ENCODE measurements at regions of chr7 and their contacts with region 1.

Region 1: GRCh38 chr7:53350241-53350640 is 314.8 kb downstream of the POM121L12 start:
- DNase-seq: peak; percentile 46
- H3K4me3 Mint-ChIP-seq: no peak overlapping the region
- H3K27ac Mint-ChIP-seq: no peak overlapping the region
- H3K4me1 Mint-ChIP-seq: no peaks in the 10 kb centered on the region
- H3K27me3 Mint-ChIP-seq: peaks cover 48% of the 10 kb centered on the region
- CTCF ChIP-seq: peak; percentile 60

Region 2: GRCh38 chr7:53292341-53292740 is 57.9 kb before region 1 on chr7:
- CTCF ChIA-PET with region 1: no interaction called
- POLR2A ChIA-PET with region 1: no interaction called
- intact Hi-C with region 1: no loop called
- DNase-seq: no peak
- H3K4me3 Mint-ChIP-seq: no peak overlapping the region
- H3K27ac Mint-ChIP-seq: no peak overlapping the region
- H3K4me1 Mint-ChIP-seq: no peaks in the 10 kb centered on the region
- H3K27me3 Mint-ChIP-seq: peaks cover 74% of the 10 kb centered on the region
- CTCF ChIP-seq: no peak

Region 3: GRCh38 chr7:54678763-54679489 is 1328.7 kb after region 1 on chr7:
- CTCF ChIA-PET with region 1: interaction called, 3 read pairs
- POLR2A ChIA-PET with region 1: no interaction called
- intact Hi-C with region 1: loop called (anchors 5 kb)
- DNase-seq: no peak
- H3K4me3 Mint-ChIP-seq: no peak overlapping the region
- H3K27ac Mint-ChIP-seq: no peak overlapping the region
- H3K4me1 Mint-ChIP-seq: no peaks in the 10 kb centered on the region
- H3K27me3 Mint-ChIP-seq: peaks cover 92% of the 10 kb centered on the region
- CTCF ChIP-seq: peak; percentile 24

Measured in MCF 10A (cell line).